BJ (cell line): ENCODE measurements at regions of chr10 and their contacts with region 1.

Region 1: DNA sequence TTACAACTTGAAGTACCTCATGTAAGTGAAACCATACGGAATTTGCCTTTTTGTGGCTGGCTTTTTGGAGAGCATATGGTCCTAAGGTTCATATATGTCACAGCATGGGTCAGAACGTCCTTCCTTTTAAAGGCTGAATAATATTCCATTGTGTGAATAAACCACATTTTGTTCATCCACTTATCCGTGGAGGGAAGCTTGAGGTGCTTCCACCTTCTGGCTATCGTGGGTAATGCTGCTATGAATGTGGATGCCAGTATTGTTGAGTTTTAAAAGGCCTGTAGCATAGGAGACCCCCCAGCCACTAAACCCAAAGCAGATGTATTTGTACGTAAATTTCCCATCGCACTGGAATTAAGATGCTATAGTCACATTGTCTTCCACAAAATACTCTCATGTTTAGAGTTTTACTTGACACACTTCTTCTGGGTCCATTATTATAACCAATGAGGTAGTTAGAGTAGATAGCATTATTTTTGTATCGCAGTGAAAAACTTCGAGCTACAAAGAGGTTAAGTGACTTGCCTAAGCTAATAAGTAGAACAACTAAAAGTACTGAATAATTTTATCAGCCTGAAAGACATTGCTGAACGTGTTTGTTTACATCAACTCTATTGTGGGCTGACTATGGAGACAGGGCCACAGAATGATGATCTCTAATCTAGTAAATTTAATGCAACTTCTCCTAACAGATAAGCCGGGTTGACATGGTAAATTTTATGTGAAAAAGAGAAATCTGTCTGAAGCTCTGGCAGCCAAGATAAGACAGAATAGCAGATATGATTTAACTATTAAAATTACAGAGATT is 183.0 kb upstream of the CTBP2 start:
- DNase-seq: no peak
- H3K4me3 ChIP-seq: no peak overlapping the region
- H3K27me3 ChIP-seq: no peaks in the 10 kb centered on the region; the same call in 1 of the 2 replicates
- CTCF ChIP-seq: peak; percentile 73

Region 2: DNA sequence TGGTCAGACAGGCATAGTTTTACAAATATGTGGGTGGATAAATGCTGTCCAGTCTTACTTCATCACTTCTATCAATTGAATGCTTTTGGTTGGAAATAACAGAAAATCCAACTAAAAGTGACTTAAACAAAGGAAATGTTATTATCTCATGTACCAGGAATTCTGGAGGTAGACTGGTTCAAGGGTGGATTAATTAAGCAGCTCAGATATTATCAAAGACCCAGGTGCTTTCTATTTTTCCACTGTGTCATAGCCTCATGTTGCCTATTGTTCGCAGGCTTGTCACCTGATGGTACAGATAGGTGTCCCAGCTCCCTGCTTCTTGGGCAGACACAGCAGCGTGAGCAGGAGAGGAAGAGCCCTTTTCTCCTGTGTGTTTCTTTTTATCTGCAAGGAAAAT is 26.9 kb before region 1 on chr10:
- CTCF ChIA-PET with region 1: no interaction called
- POLR2A ChIA-PET with region 1: no interaction called
- DNase-seq: no peak
- H3K4me3 ChIP-seq: no peak overlapping the region
- H3K27me3 ChIP-seq: no peaks in the 10 kb centered on the region; the same call in 1 of the 2 replicates
- CTCF ChIP-seq: no peak

Region 3: GRCh38 chr10:125333209-125333591 is 10.1 kb before region 1 on chr10:
- CTCF ChIA-PET with region 1: interaction called, 15 read pairs
- POLR2A ChIA-PET with region 1: no interaction called
- DNase-seq: no peak
- H3K4me3 ChIP-seq: no peak overlapping the region
- H3K27me3 ChIP-seq: peaks cover 1% of the 10 kb centered on the region; the same call in 1 of the 2 replicates
- CTCF ChIP-seq: no peak

Region 4: DNA sequence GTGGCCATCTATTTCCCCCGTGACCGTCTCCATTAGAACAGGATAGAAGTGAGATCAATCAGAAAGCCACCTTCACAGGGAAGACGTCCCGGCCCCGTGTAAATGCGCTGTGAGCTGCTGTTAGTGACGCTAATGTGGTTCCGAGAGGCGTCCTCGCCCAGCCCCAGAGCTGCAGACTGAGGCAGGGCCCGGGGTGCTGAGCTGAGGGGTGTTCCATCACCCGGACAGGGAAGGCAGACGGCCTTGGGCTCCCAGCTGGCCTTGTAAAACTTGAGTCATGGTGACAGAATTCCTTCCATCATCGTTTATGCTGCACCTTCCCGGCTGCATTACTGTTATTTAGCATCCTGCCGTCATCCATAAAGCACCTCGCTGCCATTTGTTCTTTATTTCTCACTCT is 12.3 kb after region 1 on chr10:
- CTCF ChIA-PET with region 1: interaction called, 10 read pairs
- POLR2A ChIA-PET with region 1: no interaction called
- DNase-seq: no peak
- H3K4me3 ChIP-seq: no peak overlapping the region
- H3K27me3 ChIP-seq: no peaks in the 10 kb centered on the region; the same call in 1 of the 2 replicates
- CTCF ChIP-seq: no peak